ENCODE measurements at regions of chr12 and their contacts with region 1.

Region 1: GRCh38 chr12:109597795-109598427 is 24.3 kb downstream of the MVK start:
- DNase-seq: peak; percentile 80
- H3K4me3 Mint-ChIP-seq: no peak overlapping the region
- H3K27ac Mint-ChIP-seq: no peak overlapping the region
- H3K4me1 Mint-ChIP-seq: peaks cover 8% of the 10 kb centered on the region
- H3K27me3 Mint-ChIP-seq: no peaks in the 10 kb centered on the region
- CTCF ChIP-seq: peak; percentile 89

Region 2: DNA sequence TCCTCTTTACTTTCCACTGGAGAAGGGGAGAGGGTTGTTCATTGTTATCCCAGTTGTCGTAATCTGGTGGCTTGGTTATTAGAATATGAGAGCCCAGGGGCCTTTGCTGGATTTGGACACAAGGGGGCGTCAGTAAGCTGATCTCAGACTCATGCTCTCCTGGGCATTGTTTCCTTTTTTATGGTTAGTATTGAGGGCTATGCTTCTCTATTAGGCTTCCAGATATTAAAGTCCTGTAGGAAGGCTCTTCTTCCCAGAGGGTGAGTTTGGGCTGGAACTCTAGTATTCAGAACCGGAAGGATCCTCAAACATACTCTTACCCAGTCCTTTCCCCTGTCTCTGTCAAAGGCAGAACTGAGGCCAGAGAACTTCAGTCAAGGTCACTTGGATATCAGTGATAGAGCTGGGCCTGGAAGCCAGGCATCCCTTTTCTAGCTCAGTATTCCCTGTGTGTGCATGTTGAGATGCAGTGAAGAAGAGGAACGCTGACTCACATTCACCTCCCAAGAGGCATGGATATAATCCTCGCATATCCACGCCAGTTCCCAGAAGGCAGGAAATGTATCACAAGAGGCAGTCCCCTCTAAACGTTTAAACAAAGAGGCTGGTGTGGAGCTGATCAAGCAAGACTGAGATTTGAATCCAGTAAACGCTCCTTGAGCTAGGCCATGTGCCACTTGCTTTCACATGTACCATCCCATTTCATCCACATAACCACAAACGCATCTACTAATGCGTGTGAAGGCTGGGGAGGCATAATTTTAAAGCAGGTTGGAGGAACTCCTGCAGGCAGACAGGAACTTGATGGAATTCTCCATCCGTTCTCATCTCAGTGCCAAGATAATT is 78.9 kb before region 1 on chr12:
- CTCF ChIA-PET with region 1: interaction called, 7 read pairs
- POLR2A ChIA-PET with region 1: no interaction called
- intact Hi-C with region 1: loop called (anchors 2 kb)
- DNase-seq: peak; percentile 69
- H3K4me3 Mint-ChIP-seq: no peak overlapping the region
- H3K27ac Mint-ChIP-seq: no peak overlapping the region
- H3K4me1 Mint-ChIP-seq: no peaks in the 10 kb centered on the region
- H3K27me3 Mint-ChIP-seq: no peaks in the 10 kb centered on the region
- CTCF ChIP-seq: peak; percentile 78

Region 3: GRCh38 chr12:109573029-109573913 is 24.6 kb before region 1 on chr12 and contains the starts of genes MMAB and MVK:
- CTCF ChIA-PET with region 1: interaction called, 11 read pairs
- POLR2A ChIA-PET with region 1: interaction called, 17 read pairs
- intact Hi-C with region 1: no loop called
- DNase-seq: peak; percentile 100
- H3K4me3 Mint-ChIP-seq: peak within 1 kb of the TSS; percentile 92
- H3K27ac Mint-ChIP-seq: peak within 1 kb of the TSS; percentile 97
- H3K4me1 Mint-ChIP-seq: peaks cover 16% of the 10 kb centered on the region
- H3K27me3 Mint-ChIP-seq: no peaks in the 10 kb centered on the region
- CTCF ChIP-seq: no peak
- total RNA-seq, gene MMAB: 36.0 and 59.2 TPM in 2 replicates
- total RNA-seq, gene MVK: 15.5 and 17.1 TPM in 2 replicates

Region 4: GRCh38 chr12:109612975-109613502 is 15.1 kb after region 1 on chr12:
- CTCF ChIA-PET with region 1: interaction called, 40 read pairs
- POLR2A ChIA-PET with region 1: no interaction called
- intact Hi-C with region 1: no loop called
- DNase-seq: peak; percentile 34
- H3K4me3 Mint-ChIP-seq: no peak overlapping the region
- H3K27ac Mint-ChIP-seq: no peak overlapping the region
- H3K4me1 Mint-ChIP-seq: no peaks in the 10 kb centered on the region
- H3K27me3 Mint-ChIP-seq: peaks cover 52% of the 10 kb centered on the region
- CTCF ChIP-seq: peak; percentile 25

Region 5: DNA sequence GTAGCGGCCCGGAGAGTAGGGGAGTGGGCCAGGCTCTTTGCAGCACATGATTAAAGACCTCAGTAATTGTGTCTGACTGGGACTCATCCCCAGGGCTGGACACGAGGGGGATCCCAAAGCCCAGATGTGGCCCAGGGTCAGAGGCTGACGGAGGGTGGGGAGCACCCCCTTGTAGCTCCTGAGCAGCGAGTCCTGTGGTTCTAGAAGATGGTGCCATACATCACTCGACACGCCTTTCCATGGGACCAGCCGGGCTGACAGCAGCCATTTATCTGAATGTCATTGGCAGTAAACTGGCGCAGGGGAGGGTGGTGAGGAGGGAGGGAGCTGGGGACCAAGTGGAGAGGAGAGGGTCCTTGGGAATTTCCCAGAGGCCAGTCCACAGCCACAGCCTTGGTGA is 50.6 kb after region 1 on chr12:
- CTCF ChIA-PET with region 1: no interaction called
- POLR2A ChIA-PET with region 1: no interaction called
- intact Hi-C with region 1: no loop called
- DNase-seq: no peak
- H3K4me3 Mint-ChIP-seq: no peak overlapping the region
- H3K27ac Mint-ChIP-seq: no peak overlapping the region
- H3K4me1 Mint-ChIP-seq: no peaks in the 10 kb centered on the region
- H3K27me3 Mint-ChIP-seq: peaks cover 42% of the 10 kb centered on the region
- CTCF ChIP-seq: no peak

Region 6: GRCh38 chr12:109775172-109775881 is 177.4 kb after region 1 on chr12:
- CTCF ChIA-PET with region 1: interaction called, 93 read pairs
- POLR2A ChIA-PET with region 1: interaction called, 12 read pairs
- intact Hi-C with region 1: loop called (anchors 1 kb)
- DNase-seq: peak; percentile 77
- H3K4me3 Mint-ChIP-seq: no peak overlapping the region
- H3K27ac Mint-ChIP-seq: no peak overlapping the region
- H3K4me1 Mint-ChIP-seq: peaks cover 12% of the 10 kb centered on the region
- H3K27me3 Mint-ChIP-seq: no peaks in the 10 kb centered on the region
- CTCF ChIP-seq: peak; percentile 95

Region 7: DNA sequence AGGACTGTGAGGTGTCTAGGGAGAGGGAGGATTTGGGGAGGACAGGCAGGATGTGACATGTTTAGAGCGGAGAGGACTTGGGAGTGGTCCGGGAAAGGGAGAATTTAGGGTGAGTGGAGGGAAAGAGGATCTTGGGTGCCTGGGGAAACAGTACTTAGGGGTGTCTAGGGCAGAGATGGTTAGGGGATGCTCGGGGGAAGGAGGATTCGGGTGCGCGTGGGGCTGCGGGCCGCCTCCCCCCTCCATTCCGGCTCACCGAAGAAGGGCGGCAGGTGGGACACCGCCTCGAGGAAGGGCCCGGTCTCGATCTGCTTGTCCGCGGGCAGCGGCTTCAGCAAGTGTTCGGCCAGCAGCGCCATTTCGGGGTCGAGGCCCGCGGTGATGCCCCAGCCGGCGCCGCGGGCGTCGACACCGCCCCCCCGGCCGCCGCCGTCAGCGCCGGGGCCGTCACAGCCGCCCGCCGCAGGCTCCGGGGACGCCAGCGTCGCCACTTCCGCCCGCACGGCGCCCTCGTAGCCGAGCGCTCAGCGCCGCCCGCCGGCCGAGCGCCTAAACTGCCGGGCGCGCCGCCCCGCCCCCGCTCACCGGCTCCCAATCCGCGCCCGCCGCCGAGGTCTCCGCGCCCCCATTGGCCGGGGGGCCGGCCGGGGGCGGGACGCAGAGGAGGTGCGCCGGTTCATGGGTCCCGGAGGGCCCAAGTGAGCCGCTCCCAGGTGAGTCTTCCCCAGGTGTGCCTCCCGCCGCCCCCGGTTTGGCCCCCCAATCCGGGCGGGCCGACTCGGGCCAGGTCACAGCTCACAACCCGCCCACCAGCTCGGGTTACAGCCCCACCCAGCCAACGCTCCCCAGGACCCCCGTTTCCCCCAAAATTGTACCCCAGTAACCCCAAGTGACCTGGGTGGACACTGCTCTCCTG is 282.4 kb after region 1 on chr12 and contains the start of gene GLTP:
- CTCF ChIA-PET with region 1: interaction called, 6 read pairs
- POLR2A ChIA-PET with region 1: no interaction called
- intact Hi-C with region 1: loop called (anchors 2 kb)
- DNase-seq: peak; percentile 88
- H3K4me3 Mint-ChIP-seq: peak within 1 kb of the TSS; percentile 96
- H3K27ac Mint-ChIP-seq: peak within 1 kb of the TSS; percentile 82
- H3K4me1 Mint-ChIP-seq: peaks cover 41% of the 10 kb centered on the region
- H3K27me3 Mint-ChIP-seq: no peaks in the 10 kb centered on the region
- CTCF ChIP-seq: peak; percentile 56
- total RNA-seq, gene GLTP: 37.2 and 53.3 TPM in 2 replicates